ENCODE measurements at regions of chr16 and their contacts with region 1.

Region 1: DNA sequence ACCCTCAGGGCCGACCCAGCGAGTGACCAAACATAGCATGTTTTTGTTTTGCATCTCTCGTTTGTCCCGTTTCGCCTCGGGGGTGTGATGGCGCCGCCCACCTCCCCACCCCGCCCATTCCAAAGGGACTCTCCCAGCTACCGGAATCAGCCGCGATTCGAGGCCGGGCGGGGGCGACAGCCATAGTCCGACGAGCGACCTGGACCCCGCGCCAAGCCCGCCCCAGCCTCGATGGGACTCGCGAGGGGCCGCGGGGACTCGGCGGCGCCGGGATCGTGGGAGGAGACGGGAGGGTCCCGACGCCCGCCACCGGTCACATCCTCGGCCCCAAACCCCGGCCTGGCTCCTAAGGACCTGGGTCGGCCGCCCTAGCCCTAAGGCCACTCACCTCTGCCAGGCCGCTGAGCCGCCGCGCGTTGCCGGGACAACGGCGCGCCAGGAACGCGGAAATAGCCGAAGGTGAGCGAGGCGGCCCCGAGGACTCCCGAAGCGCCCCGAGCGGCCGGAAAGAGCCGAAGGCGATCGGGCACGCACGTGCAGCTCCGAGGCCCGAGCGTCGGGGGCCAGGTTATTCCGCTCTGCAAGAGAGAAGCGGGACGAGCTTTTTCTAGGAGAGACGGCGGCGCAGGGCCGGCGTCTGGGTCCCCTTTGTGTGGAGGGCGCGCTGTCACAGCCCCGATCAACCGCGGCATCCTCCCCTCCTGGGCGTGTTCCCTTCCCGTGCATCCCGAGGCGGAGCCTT is 1.4 kb downstream of the IFT140 start:
- DNase-seq: peak; percentile 84
- H3K4me3 ChIP-seq: peak overlapping the region; percentile 78 to 85 (median 83)
- H3K27ac ChIP-seq: peak overlapping the region; percentile 74
- H3K4me1 ChIP-seq: peaks cover 22% of the 10 kb centered on the region
- H3K27me3 ChIP-seq: no peaks in the 10 kb centered on the region
- CTCF ChIP-seq: no peak

Region 2: GRCh38 chr16:1420111-1420540 is 190.3 kb before region 1 on chr16:
- CTCF ChIA-PET with region 1: no interaction called
- dilution Hi-C with region 1: no loop called
- in situ Hi-C with region 1: no loop called
- intact Hi-C with region 1: loop called (anchors 5 kb)
- DNase-seq: no peak
- H3K4me3 ChIP-seq: peak overlapping the region; percentile 69 to 95 (median 91)
- H3K27ac ChIP-seq: peak overlapping the region; percentile 66
- H3K4me1 ChIP-seq: peaks cover 6% of the 10 kb centered on the region
- H3K27me3 ChIP-seq: no peaks in the 10 kb centered on the region
- CTCF ChIP-seq: no peak

Region 3: DNA sequence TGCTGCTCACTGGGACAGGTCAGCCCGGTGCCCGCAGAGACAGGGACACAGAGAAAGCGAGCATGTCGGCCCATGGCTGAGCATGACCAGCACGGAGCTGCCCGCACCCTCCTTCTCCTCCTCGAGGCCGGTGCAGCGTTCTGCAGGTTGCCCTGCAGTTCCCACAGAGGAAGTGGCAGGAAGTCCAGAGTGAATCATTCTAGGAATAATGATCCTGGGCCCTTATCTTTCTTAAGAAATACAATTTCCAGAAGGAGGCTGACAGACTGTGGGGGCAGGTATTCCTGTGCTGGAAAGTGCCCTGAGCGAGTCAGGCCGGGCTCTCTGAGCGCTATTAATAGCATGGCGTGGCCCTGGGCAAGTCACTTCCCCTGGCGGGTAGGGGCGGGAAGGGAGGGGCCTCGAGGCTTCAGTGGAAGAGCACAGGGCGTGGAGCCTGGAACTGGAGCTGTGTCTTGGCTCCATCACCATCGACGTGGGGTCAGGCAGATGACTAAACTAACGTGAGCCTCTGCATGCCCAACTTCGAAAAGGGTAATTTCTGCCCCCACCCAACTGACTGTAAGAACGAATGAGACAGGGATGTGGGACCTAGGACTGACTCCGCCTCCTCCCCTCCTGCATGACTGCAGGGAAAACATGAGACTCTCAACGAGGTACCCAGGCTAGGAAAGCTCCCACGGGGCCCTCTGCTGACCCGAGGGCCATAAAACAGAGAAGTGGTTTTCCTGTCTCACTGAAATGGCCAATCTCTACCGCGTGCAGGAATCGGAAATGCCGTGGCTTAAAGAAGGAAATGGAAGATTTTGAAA is 67.2 kb before region 1 on chr16:
- CTCF ChIA-PET with region 1: no interaction called
- dilution Hi-C with region 1: no loop called
- in situ Hi-C with region 1: no loop called
- intact Hi-C with region 1: no loop called
- DNase-seq: peak; percentile 27
- H3K4me3 ChIP-seq: no peak overlapping the region
- H3K27ac ChIP-seq: no peak overlapping the region
- H3K4me1 ChIP-seq: peaks cover 12% of the 10 kb centered on the region
- H3K27me3 ChIP-seq: no peaks in the 10 kb centered on the region
- CTCF ChIP-seq: peak in 1 of 2 donors; percentile 13

Region 4: GRCh38 chr16:1645914-1646525 is 35.6 kb after region 1 on chr16:
- CTCF ChIA-PET with region 1: no interaction called
- dilution Hi-C with region 1: no loop called
- in situ Hi-C with region 1: no loop called
- intact Hi-C with region 1: loop called (anchors 5 kb)
- DNase-seq: peak; percentile 60
- H3K4me3 ChIP-seq: no peak overlapping the region
- H3K27ac ChIP-seq: no peak overlapping the region
- H3K4me1 ChIP-seq: peaks cover 11% of the 10 kb centered on the region
- H3K27me3 ChIP-seq: no peaks in the 10 kb centered on the region
- CTCF ChIP-seq: no peak

Region 5: GRCh38 chr16:1691276-1691675 is 80.8 kb after region 1 on chr16:
- CTCF ChIA-PET with region 1: no interaction called
- dilution Hi-C with region 1: no loop called
- in situ Hi-C with region 1: no loop called
- intact Hi-C with region 1: no loop called
- DNase-seq: peak; percentile 75
- H3K4me3 ChIP-seq: no peak overlapping the region
- H3K27ac ChIP-seq: peak overlapping the region; percentile 97
- H3K4me1 ChIP-seq: peaks cover 56% of the 10 kb centered on the region
- H3K27me3 ChIP-seq: no peaks in the 10 kb centered on the region
- CTCF ChIP-seq: peak; percentile 19 to 48

Region 6: DNA sequence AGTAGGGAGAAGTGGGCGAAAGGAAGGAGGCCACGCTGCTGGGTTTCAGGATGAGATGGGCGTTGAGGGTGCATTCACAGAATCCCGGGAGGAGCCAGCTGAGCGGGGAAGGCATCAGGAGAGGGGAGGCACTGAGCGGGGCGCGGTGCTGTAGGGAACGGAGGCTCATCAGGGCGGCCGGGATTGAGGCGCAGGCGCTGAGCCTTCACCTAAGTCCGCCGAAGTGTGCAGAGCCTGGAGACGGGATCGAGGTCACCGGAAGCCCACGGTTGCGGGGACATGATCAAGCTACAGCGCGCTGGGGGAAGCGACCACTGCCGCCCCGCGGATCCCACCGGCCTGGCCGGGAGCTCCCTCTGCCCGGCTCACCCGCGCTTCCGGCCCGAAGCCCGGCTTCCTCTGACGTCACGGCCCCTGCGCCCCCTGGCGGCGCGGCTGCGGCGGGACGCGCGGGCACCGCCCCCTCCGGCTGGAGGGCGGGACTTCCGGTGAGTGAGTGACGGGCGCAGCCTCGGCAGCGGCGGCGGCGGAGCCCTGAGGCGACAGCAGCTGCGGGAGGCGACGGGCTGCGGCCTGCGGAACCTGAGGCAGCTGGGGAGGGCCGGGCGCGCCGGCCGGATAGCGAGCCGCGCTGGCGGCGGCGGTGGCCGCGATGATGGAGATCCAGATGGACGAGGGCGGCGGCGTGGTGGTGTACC is 95.4 kb after region 1 on chr16 and contains the start of gene MAPK8IP3:
- CTCF ChIA-PET with region 1: no interaction called
- dilution Hi-C with region 1: no loop called
- in situ Hi-C with region 1: loop called in 1 of 2 experiments (anchors 10 kb)
- intact Hi-C with region 1: loop called (anchors 5 kb)
- DNase-seq: peak; percentile 90
- H3K4me3 ChIP-seq: peak within 1 kb of the TSS; percentile 57 to 100 (median 87)
- H3K27ac ChIP-seq: peak within 1 kb of the TSS; percentile 86
- H3K4me1 ChIP-seq: peaks cover 24% of the 10 kb centered on the region
- H3K27me3 ChIP-seq: no peaks in the 10 kb centered on the region
- CTCF ChIP-seq: peak; percentile 70 to 79
- total RNA-seq, gene MAPK8IP3: 45.2 to 51.2 TPM

Region 7: GRCh38 chr16:1772736-1773584 is 162.5 kb after region 1 on chr16 and contains the starts of genes EME2 and MRPS34:
- CTCF ChIA-PET with region 1: no interaction called
- dilution Hi-C with region 1: no loop called
- in situ Hi-C with region 1: no loop called
- intact Hi-C with region 1: loop called (anchors 5 kb)
- DNase-seq: peak; percentile 83
- H3K4me3 ChIP-seq: peak within 1 kb of the TSS; percentile 69 to 82 (median 70)
- H3K27ac ChIP-seq: peak within 1 kb of the TSS; percentile 3
- H3K4me1 ChIP-seq: peaks cover 31% of the 10 kb centered on the region
- H3K27me3 ChIP-seq: no peaks in the 10 kb centered on the region
- CTCF ChIP-seq: peak; percentile 45 to 77
- total RNA-seq, gene EME2: 17.2 to 29.0 TPM
- total RNA-seq, gene MRPS34: 34.7 to 99.4 TPM